Endothelial cell of umbilical vein (primary cell): ENCODE measurements at regions of chr13 and their contacts with region 1.

Region 1: GRCh38 chr13:101514788-101515187 is 62.3 kb downstream of the ITGBL1 start:
- DNase-seq: peak; percentile 80
- H3K4me3 ChIP-seq: no peak overlapping the region
- H3K27ac ChIP-seq: no peak overlapping the region
- H3K4me1 ChIP-seq: peaks cover 37% of the 10 kb centered on the region
- H3K27me3 ChIP-seq: no peaks in the 10 kb centered on the region
- CTCF ChIP-seq: peak; percentile 41 to 44
- POLR2A ChIP-seq: no peak

Region 2: GRCh38 chr13:100951016-100951415 is 563.8 kb before region 1 on chr13:
- CTCF ChIA-PET with region 1: no interaction called
- POLR2A ChIA-PET with region 1: no interaction called
- dilution Hi-C with region 1: no loop called
- intact Hi-C with region 1: no loop called
- DNase-seq: no peak
- H3K4me3 ChIP-seq: no peak overlapping the region
- H3K27ac ChIP-seq: no peak overlapping the region
- H3K4me1 ChIP-seq: no peaks in the 10 kb centered on the region
- H3K27me3 ChIP-seq: no peaks in the 10 kb centered on the region
- CTCF ChIP-seq: no peak
- POLR2A ChIP-seq: no peak

Region 3: GRCh38 chr13:101492251-101492910 is 22.4 kb before region 1 on chr13:
- CTCF ChIA-PET with region 1: interaction called, 13 read pairs
- POLR2A ChIA-PET with region 1: no interaction called
- dilution Hi-C with region 1: no loop called
- intact Hi-C with region 1: loop called (anchors 1 kb)
- DNase-seq: peak; percentile 83
- H3K4me3 ChIP-seq: no peak overlapping the region
- H3K27ac ChIP-seq: peak overlapping the region; percentile 20
- H3K4me1 ChIP-seq: peaks cover 41% of the 10 kb centered on the region
- H3K27me3 ChIP-seq: no peaks in the 10 kb centered on the region
- CTCF ChIP-seq: no peak
- POLR2A ChIP-seq: no peak

Region 4: DNA sequence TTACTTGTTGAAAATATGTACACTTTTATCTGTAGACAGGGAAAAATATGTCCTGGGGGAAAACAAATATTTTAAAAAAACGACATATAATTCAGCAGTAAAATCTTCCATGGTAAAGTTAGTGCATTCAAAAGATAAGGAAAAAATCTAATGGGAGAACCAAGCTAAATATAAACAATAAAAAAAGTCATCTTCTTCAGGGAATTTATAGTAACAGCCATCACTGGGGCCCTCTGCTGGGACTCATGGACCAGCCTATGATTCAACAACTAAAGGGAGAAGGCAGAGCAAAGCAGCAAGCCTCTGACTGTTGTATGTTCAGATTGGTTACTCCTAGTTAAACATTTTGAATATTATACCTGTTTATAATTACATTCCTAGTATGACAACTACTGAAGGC is 30.7 kb after region 1 on chr13:
- CTCF ChIA-PET with region 1: interaction called, 11 read pairs
- POLR2A ChIA-PET with region 1: no interaction called
- dilution Hi-C with region 1: no loop called
- intact Hi-C with region 1: no loop called
- DNase-seq: no peak
- H3K4me3 ChIP-seq: no peak overlapping the region
- H3K27ac ChIP-seq: no peak overlapping the region
- H3K4me1 ChIP-seq: no peaks in the 10 kb centered on the region
- H3K27me3 ChIP-seq: no peaks in the 10 kb centered on the region
- CTCF ChIP-seq: no peak
- POLR2A ChIP-seq: no peak

Region 5: GRCh38 chr13:101661839-101662238 is 147.1 kb after region 1 on chr13:
- CTCF ChIA-PET with region 1: interaction called, 10 read pairs
- POLR2A ChIA-PET with region 1: no interaction called
- dilution Hi-C with region 1: no loop called
- intact Hi-C with region 1: no loop called
- DNase-seq: peak; percentile 84
- H3K4me3 ChIP-seq: no peak overlapping the region
- H3K27ac ChIP-seq: peak overlapping the region; percentile 32
- H3K4me1 ChIP-seq: peaks cover 23% of the 10 kb centered on the region
- H3K27me3 ChIP-seq: no peaks in the 10 kb centered on the region
- CTCF ChIP-seq: no peak
- POLR2A ChIP-seq: no peak

Region 6: DNA sequence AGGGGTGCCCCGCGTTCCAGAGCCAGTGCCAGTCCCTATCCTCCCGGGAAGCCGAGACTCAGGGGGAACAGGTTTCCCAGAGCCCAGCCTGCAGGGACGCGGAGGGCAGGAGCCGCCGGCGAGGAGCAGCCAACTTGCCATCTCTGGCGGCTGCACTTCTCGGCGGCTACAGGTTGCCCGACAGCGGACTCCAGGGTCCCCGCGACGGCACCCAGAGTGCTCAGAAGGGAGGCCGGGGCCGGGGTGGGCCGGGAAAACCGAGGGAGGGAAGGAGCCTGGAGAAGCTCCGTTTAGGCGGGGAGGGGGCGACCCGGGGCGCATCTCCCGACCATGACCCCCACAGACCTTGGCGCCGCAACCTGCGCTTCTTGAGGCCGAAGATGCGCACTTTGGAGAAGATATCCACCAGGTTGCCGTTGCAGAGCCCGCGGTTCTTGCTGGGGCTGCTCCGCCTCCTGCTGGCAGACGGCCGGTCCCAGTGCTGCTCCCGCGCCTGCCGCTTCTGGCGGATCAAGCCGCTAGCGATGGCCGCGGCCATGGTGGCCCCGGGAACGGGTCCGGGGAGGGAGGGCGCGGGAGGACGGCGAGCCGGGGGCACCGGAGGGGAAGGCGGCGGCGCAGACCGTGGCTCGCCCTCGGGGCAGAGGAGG is 401.4 kb after region 1 on chr13:
- CTCF ChIA-PET with region 1: no interaction called
- POLR2A ChIA-PET with region 1: no interaction called
- dilution Hi-C with region 1: no loop called
- intact Hi-C with region 1: loop called (anchors 5 kb)
- DNase-seq: no peak
- H3K4me3 ChIP-seq: peak overlapping the region in 1 of 3 experiments; percentile 2
- H3K27ac ChIP-seq: no peak overlapping the region
- H3K4me1 ChIP-seq: no peaks in the 10 kb centered on the region
- H3K27me3 ChIP-seq: peaks cover 33 to 64% of the 10 kb centered on the region in 2 experiments
- CTCF ChIP-seq: peak in 1 of 2 donors; percentile 34
- POLR2A ChIP-seq: no peak